ENCODE measurements at regions of chr19 and their contacts with region 1.

Region 1: DNA sequence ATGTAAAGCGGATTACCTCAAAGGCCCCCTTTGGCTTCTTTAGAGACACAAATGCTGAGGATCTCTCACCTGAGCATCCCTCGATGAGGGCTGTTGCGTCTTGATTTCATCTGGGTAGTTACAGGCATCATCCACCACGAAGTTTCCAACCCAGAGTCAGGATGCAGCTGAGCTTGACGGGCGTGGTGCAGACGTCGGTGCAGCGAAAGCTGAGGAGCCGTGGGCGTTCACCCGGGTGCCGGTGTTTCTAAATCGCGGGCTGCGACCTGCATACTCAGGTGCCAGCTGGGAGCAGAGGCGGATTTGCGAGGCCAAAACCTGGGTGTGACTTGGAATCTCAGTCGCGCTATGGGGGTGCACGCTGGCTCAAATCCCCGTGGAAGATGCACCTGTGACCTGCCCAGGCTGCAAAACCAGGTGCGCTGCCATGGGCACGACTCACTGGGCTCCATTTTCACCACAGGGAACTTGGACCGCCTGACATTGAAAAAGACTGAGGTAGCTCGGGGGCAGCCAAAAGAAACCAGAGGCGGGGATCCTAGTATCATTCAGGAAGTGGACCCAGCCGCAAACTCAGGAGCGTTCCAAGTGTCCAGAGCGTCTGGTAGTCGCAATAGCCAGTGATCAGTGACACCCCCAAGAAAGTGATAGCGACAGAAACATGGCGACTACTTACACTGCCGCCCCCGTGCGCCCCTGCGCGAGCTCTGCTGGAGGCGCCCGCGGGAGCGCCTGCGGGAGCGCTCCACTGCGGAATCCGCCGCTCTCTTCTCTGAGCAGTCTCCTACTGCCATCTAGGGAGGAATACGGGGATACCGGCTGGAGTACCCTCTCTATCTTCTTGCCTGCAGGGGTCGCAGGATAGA is 36.4 kb upstream of the IGFL4 start:
- DNase-seq: peak; percentile 82
- ATAC-seq: peak; percentile 96
- H3K4me3 ChIP-seq: peak overlapping the region; percentile 39 to 54
- H3K27ac ChIP-seq: no peak overlapping the region
- H3K4me1 ChIP-seq: peaks cover 8 to 17% of the 10 kb centered on the region in 2 experiments; a peak in 2 of 4 replicates
- H3K27me3 ChIP-seq: peaks cover 71% of the 10 kb centered on the region
- CTCF ChIP-seq: peak; percentile 100
- POLR2A ChIP-seq: no peak
- RAD21 ChIP-seq: peak; percentile 99

Region 2: DNA sequence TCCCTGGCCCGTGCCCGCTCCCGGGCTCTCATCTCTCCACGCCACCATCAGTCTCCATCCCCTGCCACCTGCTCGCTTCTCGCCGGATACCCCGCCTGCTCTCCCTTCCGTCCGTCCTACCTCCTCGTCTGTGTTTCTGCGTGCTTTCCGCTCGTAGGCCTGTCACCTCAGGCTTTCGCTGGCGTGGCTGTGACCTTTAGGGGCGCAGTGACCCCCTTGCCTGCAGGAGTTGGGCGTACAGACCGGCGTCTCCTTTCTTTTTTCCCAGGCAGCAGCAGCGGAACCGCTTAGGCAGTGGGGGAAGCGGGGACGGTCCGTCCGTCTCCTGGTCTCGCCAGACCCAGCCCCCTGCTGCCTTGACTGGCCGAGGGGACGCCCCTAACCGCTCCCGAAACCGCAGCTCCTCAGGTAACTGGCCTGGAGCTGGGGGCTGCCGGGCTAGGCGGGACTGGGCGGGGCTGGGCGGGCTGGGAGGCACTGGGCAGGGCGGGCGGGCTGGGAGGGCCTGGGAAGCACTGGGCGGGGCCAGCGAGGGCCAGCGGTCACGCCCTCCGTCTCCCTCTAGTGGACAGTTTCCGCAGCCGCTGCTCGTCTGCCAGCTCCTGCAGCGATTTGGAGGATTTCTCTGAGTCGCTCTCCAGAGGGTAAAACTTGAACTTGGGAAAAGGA is 60.6 kb before region 1 on chr19:
- CTCF ChIA-PET with region 1: interaction called, 12 read pairs
- POLR2A ChIA-PET with region 1: no interaction called
- RAD21 ChIA-PET with region 1: no interaction called
- intact Hi-C with region 1: no loop called
- DNase-seq: peak; percentile 45
- ATAC-seq: peak; percentile 92
- H3K4me3 ChIP-seq: no peak overlapping the region
- H3K27ac ChIP-seq: no peak overlapping the region; the same call in 1 of the 2 replicates
- H3K4me1 ChIP-seq: peaks cover 3 to 14% of the 10 kb centered on the region in 2 experiments; a peak in 3 of 4 replicates
- H3K27me3 ChIP-seq: no peaks in the 10 kb centered on the region
- CTCF ChIP-seq: peak; percentile 52 to 79 (median 64)
- POLR2A ChIP-seq: no peak
- RAD21 ChIP-seq: peak; percentile 59

Region 3: DNA sequence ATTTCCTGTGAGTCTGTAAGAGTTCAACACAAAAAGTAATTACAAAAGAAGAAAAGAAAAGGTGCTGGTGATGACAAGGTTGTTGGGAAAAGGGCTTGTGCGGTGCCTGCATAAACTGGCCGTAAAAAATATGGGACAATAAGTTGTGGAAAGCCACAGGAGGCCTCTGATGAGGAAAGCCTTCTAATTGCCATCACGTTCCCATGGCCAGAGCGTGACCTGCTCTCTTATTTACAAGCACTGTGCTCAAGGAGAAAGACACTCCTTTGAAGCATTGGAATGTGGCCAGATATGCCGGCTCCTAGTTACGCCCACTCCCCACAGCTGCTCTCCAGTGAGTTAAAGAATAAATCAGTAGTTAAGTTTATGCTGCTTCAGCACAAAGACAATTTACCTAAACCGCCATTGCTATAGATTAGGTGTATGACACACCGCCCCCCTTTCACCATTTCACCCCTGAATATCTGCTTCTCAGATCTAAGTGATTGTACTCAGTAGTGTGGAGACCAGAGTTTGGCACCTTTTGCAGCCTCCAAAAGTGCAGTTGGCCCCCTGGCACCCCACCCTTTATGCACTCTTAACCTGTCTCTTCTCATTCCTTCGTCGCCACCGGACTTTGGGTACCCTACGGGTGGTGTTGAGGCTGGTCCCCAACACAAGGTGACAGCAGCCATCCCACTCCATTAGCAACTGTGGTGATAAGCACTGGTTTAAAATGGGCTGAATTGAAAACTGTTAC is 46.2 kb before region 1 on chr19:
- CTCF ChIA-PET with region 1: interaction called, 117 read pairs
- POLR2A ChIA-PET with region 1: interaction called, 4 read pairs
- RAD21 ChIA-PET with region 1: interaction called, 6 to 14 read pairs
- intact Hi-C with region 1: loop called (anchors 1 kb)
- DNase-seq: no peak
- ATAC-seq: no peak
- H3K4me3 ChIP-seq: no peak overlapping the region
- H3K27ac ChIP-seq: no peak overlapping the region
- H3K4me1 ChIP-seq: no peaks in the 10 kb centered on the region
- H3K27me3 ChIP-seq: no peaks in the 10 kb centered on the region
- CTCF ChIP-seq: no peak
- POLR2A ChIP-seq: no peak
- RAD21 ChIP-seq: no peak

Region 4: DNA sequence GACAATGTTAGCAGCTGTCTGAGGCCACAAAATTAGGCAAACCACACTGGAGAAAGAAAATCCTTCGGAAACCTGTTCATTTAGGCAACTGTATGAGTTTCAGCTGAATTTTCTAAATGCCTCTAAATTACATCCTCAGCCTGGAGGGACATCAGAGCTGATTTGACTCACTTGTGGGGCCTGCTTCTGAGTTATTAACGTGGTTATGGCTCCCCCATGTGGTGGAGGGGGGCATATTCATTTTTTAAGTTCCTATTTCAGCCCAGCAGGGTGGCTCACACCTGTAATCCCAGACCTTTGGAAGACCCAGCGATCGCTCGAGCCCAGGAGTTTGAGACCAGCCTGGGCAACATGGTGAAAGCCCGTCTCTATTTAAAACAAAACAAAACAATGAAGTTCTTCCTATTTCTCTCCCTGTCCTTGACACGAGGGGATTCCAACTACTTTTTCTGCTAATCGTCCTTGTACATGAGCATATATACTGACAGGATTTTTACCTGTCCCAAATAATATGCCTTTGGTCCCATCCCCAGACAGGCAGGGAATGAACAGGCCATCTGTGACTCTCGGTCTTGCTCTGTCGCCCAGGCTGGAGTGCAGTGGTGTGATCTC is 188.1 kb after region 1 on chr19:
- CTCF ChIA-PET with region 1: interaction called, 305 read pairs
- POLR2A ChIA-PET with region 1: interaction called, 3 read pairs
- RAD21 ChIA-PET with region 1: interaction called, 8 to 14 read pairs
- intact Hi-C with region 1: loop called (anchors 1 kb)
- DNase-seq: peak; percentile 77
- ATAC-seq: peak; percentile 87
- H3K4me3 ChIP-seq: no peak overlapping the region
- H3K27ac ChIP-seq: no peak overlapping the region
- H3K4me1 ChIP-seq: peaks cover 15 to 16% of the 10 kb centered on the region in 2 experiments
- H3K27me3 ChIP-seq: peaks cover 36% of the 10 kb centered on the region
- CTCF ChIP-seq: peak; percentile 65 to 96 (median 82)
- POLR2A ChIP-seq: no peak
- RAD21 ChIP-seq: peak; percentile 95

Region 5: GRCh38 chr19:46513461-46514236 is 436.5 kb after region 1 on chr19:
- CTCF ChIA-PET with region 1: interaction called, 5 read pairs
- POLR2A ChIA-PET with region 1: no interaction called
- RAD21 ChIA-PET with region 1: no interaction called
- intact Hi-C with region 1: loop called (anchors 10 kb)
- DNase-seq: peak; percentile 62
- ATAC-seq: peak; percentile 92
- H3K4me3 ChIP-seq: no peak overlapping the region
- H3K27ac ChIP-seq: no peak overlapping the region
- H3K4me1 ChIP-seq: peaks cover 0 to 10% of the 10 kb centered on the region in 2 experiments; a peak in 2 of 4 replicates
- H3K27me3 ChIP-seq: no peaks in the 10 kb centered on the region
- CTCF ChIP-seq: peak; percentile 94 to 98 (median 94)
- POLR2A ChIP-seq: no peak
- RAD21 ChIP-seq: peak; percentile 96